ENCODE measurements at regions of chr3 and their contacts with region 1.

Region 1: DNA sequence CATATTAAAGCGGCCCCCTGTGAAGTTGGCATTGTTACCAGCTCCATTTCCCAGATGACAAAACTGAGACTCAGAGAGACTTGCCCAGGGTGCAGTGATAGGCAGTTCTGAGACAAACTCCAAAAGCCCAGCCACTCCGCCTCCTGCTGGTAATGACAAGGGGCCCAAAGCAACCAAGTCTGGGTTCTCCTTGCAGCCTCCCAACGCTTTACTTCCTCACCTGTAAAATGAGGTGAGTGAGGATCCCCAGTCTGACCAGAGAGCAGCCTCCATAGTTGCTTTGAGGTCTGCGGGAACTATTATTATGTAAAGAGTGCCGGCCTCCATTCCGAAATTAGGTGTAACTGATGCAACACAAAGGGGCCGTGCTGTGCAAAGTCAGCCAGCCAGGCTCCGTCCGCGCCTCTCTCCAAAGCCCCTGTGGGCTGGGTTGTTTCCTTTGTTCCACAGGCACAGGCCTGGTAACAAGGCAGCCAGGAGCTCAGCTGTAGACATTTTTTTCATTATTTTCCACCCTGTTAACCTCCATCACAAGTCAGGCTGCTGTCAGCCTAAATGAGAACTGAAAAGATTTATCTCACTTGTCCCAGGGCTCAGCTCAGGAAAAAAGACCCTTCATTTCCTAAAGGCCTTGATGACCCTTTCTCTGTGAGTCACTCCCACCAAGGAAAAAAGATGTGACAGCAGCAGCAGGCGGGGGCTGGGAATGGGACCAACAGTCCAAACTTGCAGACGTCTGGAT is 139.1 kb upstream of the RAD18 start:
- DNase-seq: no peak
- ATAC-seq: no peak

Region 2: GRCh38 chr3:7241584-7242302 is 1860.7 kb before region 1 on chr3:
- intact Hi-C with region 1: loop called (anchors 5 kb)
- DNase-seq: no peak
- ATAC-seq: no peak

Measured in sciatic nerve (tissue), 2 donors.